ENCODE measurements at regions of chr20 and their contacts with region 1.

Region 1: DNA sequence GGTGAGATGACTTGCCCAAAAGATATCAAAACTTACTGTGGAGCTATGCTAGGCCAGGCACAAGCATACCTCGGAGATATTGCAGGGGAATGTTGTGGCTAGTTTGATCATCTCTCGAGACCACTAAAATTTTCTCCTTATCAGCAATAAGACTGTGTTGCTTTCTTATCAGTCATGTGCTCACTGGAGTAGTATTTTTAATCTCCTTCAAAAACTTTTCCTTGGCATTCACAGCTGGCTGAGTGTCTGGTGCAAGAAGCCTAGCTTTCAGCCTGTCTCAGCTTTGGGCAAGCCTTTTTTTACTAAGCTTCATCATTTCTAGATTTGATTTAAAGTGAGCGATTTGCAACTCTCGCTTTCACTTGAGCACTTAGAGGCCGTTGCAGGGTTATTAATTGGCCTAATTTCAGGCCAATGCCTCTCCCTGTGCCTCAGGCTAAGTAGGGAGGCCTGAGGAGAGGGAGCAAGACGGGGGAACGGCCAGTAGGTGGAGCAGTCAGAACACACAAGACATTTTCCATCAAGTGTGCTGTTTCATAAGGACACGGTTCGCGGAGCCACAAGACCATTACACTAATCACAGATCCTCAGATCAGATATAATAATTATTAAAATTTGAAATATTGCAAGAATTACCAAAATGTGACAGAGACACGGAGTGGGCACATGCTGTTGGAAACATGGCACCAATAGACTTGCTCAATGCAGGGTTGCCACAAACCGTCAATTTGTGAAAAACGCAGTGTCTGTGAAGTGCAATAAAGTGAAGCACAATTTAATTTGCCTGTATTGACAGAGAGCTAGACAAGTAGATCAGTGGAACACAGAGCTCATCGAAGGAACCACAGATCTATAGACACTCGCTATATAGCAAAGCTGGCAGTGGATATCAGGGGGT is 106.8 kb upstream of the SIRPG start:
- DNase-seq: peak; percentile 40 to 56
- ATAC-seq: peak; percentile 78 to 89
- H3K4me3 ChIP-seq: no peak overlapping the region
- H3K27ac ChIP-seq: no peak overlapping the region
- H3K4me1 ChIP-seq: no peaks in the 10 kb centered on the region
- H3K27me3 ChIP-seq: no peaks in the 10 kb centered on the region
- CTCF ChIP-seq: peak; percentile 26 to 73 (median 64)
- POLR2A ChIP-seq: no peak

Region 2: GRCh38 chr20:1776681-1777475 is 12.5 kb after region 1 on chr20:
- in situ Hi-C with region 1: no loop called
- intact Hi-C with region 1: loop called (anchors 1 kb)
- DNase-seq: peak; percentile 58 to 79
- ATAC-seq: peak; percentile 98 to 99
- H3K4me3 ChIP-seq: peak overlapping the region; percentile 57 to 92 (median 67)
- H3K27ac ChIP-seq: peak overlapping the region in 2 of 4 donors; percentile 37 to 68
- H3K4me1 ChIP-seq: peaks cover 6 to 10% of the 10 kb centered on the region in 2 donors
- H3K27me3 ChIP-seq: no peaks in the 10 kb centered on the region
- CTCF ChIP-seq: peak; percentile 54 to 86 (median 76)
- POLR2A ChIP-seq: no peak

Region 3: GRCh38 chr20:1844325-1845162 is 80.2 kb after region 1 on chr20:
- in situ Hi-C with region 1: no loop called
- intact Hi-C with region 1: no loop called
- DNase-seq: peak in 1 of 2 donors; percentile 55
- ATAC-seq: peak; percentile 26 to 36
- H3K4me3 ChIP-seq: no peak overlapping the region
- H3K27ac ChIP-seq: no peak overlapping the region
- H3K4me1 ChIP-seq: peaks cover 0 to 5% of the 10 kb centered on the region in 2 donors
- H3K27me3 ChIP-seq: no peaks in the 10 kb centered on the region
- CTCF ChIP-seq: no peak
- POLR2A ChIP-seq: no peak

Measured in gastrocnemius medialis (tissue), 4 donors.